ENCODE measurements at regions of chr6 and their contacts with region 1.

Region 1: DNA sequence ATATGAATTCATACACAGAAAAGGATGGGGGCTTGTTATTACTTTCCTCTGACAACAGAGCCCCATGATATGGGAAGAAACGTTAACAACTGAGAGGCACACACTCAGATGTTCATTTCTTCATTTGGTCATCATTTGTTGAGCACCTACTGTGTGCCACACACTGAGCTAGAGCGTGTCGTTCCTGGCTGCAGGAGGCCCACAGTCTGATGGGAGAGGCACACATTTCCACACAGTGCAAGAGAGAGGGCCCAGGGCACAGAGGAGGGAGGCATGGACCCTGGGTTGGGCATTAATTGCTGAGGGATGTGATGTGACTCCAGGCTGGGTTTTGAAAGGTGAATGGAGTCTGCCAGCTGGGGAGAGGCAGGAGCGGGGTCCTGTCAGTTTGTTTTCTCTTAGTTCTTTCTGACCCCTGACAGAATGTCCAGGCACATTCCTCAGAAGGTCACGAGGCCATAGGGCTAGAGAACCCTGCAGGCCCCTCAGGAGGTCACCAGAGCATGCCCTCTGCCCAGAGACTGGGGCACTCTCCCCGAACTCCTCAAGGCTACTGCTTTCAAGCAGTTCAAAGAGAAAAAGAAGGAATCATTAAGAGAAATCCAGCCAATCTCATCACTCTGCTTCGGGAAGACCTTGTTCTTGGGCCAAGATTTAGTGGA is 216.2 kb downstream of the UST start:
- DNase-seq: no peak
- H3K4me3 ChIP-seq: no peak overlapping the region
- H3K27ac ChIP-seq: no peak overlapping the region
- H3K4me1 ChIP-seq: no peaks in the 10 kb centered on the region
- H3K27me3 ChIP-seq: no peaks in the 10 kb centered on the region
- CTCF ChIP-seq: no peak
- POLR2A ChIP-seq: no peak

Region 2: GRCh38 chr6:148407372-148407771 is 555.6 kb before region 1 on chr6:
- intact Hi-C with region 1: no loop called
- DNase-seq: no peak
- H3K4me3 ChIP-seq: no peak overlapping the region
- H3K27ac ChIP-seq: peak overlapping the region; percentile 19 to 21
- H3K4me1 ChIP-seq: no peaks in the 10 kb centered on the region
- H3K27me3 ChIP-seq: no peaks in the 10 kb centered on the region
- CTCF ChIP-seq: no peak
- POLR2A ChIP-seq: no peak

Region 3: DNA sequence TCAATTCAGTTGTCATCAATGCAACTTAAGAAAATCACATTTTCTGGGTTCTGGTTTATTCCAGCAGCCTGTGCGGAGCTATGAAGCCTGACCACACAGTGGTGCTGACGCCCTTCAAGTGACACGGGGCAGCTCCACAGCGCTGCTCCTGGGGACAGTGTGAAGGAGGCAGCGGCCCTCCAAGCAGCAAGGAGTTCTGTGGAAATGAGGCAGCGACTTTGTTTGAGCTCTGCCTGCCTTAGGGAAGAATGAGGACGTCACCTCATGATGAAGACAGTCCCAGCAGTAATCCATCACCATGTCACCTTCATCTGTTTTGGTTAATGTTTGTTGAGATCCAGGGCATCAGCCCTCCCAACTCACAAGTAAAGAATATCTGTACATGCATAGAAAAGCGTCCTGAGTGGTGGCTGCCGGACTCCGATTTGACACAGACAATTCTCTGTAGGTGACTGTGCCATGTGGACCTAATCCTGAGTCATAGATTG is 384.7 kb before region 1 on chr6:
- intact Hi-C with region 1: loop called (anchors 5 kb)
- DNase-seq: peak; percentile 66
- H3K4me3 ChIP-seq: no peak overlapping the region
- H3K27ac ChIP-seq: no peak overlapping the region
- H3K4me1 ChIP-seq: no peaks in the 10 kb centered on the region
- H3K27me3 ChIP-seq: no peaks in the 10 kb centered on the region
- CTCF ChIP-seq: peak; percentile 46 to 75 (median 66)
- POLR2A ChIP-seq: no peak

Measured in prostate gland (tissue), 2 donors.